ENCODE measurements at regions of chrX and their contacts with region 1.

Region 1: GRCh38 chrX:44203791-44204190 is 139.7 kb downstream of the EFHC2 start:
- DNase-seq: no peak
- H3K4me3 ChIP-seq: no peak overlapping the region
- H3K27ac ChIP-seq: no peak overlapping the region
- H3K4me1 ChIP-seq: no peaks in the 10 kb centered on the region
- H3K27me3 ChIP-seq: no peaks in the 10 kb centered on the region
- CTCF ChIP-seq: no peak

Region 2: DNA sequence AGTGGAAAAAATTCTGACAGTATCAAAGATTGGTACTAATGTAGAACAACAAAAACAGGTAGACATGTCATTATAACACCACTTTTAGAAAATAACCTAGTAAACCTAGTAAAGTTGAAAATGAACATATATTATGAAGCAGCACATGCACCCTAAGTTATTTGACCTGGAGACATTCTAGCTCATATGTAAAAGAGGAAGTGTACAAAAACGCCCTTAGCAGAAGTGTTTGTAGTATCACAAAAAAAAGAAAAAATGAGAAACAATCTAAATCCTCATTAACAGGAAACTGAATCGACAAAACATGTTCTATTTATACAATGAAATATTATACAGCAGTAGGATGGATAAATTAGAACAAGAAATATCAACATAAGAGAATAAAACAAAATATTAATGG is 1107.0 kb before region 1 on chrX:
- intact Hi-C with region 1: no loop called
- DNase-seq: no peak
- H3K4me3 ChIP-seq: no peak overlapping the region
- H3K27ac ChIP-seq: no peak overlapping the region
- H3K4me1 ChIP-seq: no peaks in the 10 kb centered on the region
- H3K27me3 ChIP-seq: no peaks in the 10 kb centered on the region
- CTCF ChIP-seq: no peak

Region 3: GRCh38 chrX:44130189-44130588 is 73.6 kb before region 1 on chrX:
- intact Hi-C with region 1: loop called (anchors 10 kb)
- DNase-seq: no peak
- H3K4me3 ChIP-seq: no peak overlapping the region
- H3K27ac ChIP-seq: no peak overlapping the region
- H3K4me1 ChIP-seq: no peaks in the 10 kb centered on the region
- H3K27me3 ChIP-seq: no peaks in the 10 kb centered on the region
- CTCF ChIP-seq: no peak

Region 4: GRCh38 chrX:45353456-45353855 is 1149.7 kb after region 1 on chrX:
- intact Hi-C with region 1: no loop called
- DNase-seq: no peak
- H3K4me3 ChIP-seq: no peak overlapping the region
- H3K27ac ChIP-seq: no peak overlapping the region
- H3K4me1 ChIP-seq: peaks cover 0 to 15% (median 0%) of the 10 kb centered on the region in 4 donors
- H3K27me3 ChIP-seq: no peaks in the 10 kb centered on the region
- CTCF ChIP-seq: no peak